Heart left ventricle (tissue), 16 donors: ENCODE measurements at regions of chr7 and their contacts with region 1.

Region 1: DNA sequence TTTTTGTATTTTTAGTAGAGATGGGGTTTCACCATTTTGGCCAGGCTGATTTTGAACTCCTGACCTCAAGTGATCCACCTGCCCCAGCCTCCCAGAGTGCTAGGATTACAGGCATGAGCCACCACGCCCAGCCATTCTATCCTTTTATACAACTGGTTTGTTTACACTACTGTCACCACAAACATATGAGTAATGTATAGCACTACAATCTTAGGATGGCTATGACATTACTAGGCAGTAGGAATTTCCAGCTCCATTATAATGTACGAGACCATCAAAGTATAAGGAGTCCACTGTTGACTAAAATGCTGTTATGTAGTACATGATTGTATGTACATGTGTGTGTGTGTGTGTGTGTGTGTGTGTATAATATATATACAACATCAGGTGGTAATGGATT is 1126.1 kb upstream of the LRRN3 start:
- DNase-seq: no peak
- ATAC-seq: no peak
- H3K4me3 ChIP-seq: no peak overlapping the region
- H3K27ac ChIP-seq: no peak overlapping the region
- H3K4me1 ChIP-seq: no peaks in the 10 kb centered on the region
- H3K27me3 ChIP-seq: no peaks in the 10 kb centered on the region
- CTCF ChIP-seq: no peak
- POLR2A ChIP-seq: no peak

Region 2: DNA sequence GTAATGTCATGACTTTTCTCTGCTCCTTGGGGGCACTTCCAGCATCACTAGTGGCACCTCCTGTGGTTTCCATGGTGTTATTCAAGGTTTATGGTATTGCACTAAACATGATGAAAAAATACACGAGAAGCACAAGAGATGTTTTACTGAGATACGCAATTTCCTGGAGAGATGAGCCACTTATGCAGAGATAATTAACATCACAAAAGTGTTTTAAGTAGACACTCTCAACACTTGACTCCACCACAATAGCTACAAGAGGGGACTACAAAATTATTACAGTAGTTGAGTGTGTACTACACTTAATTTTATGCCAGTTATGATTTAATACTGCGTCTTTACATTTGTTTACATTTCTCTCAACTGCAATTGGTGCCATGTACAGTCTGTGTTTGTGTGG is 488.4 kb before region 1 on chr7:
- intact Hi-C with region 1: no loop called
- DNase-seq: no peak
- ATAC-seq: no peak
- H3K4me3 ChIP-seq: no peak overlapping the region
- H3K27ac ChIP-seq: no peak overlapping the region
- H3K4me1 ChIP-seq: no peaks in the 10 kb centered on the region
- H3K27me3 ChIP-seq: no peaks in the 10 kb centered on the region
- CTCF ChIP-seq: no peak
- POLR2A ChIP-seq: no peak

Region 3: DNA sequence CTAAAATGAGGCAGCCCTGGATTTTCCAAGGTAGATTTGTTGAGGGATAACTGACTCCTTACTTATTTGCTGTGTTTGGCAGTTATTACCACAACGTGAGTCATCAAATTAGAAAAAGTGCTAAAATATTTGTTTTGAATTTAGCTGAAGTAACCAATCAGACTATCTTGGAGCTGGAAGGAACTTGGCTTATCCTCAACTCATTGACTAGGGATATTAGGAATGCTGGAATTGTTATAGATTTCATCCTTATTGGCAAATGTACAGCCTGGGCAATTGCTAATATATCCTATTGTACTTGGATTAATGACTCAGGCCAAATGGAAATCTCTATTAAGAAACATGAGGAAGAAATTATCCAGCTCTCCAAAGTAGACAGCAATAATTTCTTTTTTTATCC is 62.9 kb before region 1 on chr7:
- intact Hi-C with region 1: loop called in 1 of 10 experiments (anchors 10 kb)
- DNase-seq: no peak
- ATAC-seq: no peak
- H3K4me3 ChIP-seq: no peak overlapping the region
- H3K27ac ChIP-seq: no peak overlapping the region
- H3K4me1 ChIP-seq: no peaks in the 10 kb centered on the region
- H3K27me3 ChIP-seq: no peaks in the 10 kb centered on the region
- CTCF ChIP-seq: no peak
- POLR2A ChIP-seq: no peak